RWPE1 (cell line): ENCODE measurements at regions of chr17 and their contacts with region 1.

Region 1: DNA sequence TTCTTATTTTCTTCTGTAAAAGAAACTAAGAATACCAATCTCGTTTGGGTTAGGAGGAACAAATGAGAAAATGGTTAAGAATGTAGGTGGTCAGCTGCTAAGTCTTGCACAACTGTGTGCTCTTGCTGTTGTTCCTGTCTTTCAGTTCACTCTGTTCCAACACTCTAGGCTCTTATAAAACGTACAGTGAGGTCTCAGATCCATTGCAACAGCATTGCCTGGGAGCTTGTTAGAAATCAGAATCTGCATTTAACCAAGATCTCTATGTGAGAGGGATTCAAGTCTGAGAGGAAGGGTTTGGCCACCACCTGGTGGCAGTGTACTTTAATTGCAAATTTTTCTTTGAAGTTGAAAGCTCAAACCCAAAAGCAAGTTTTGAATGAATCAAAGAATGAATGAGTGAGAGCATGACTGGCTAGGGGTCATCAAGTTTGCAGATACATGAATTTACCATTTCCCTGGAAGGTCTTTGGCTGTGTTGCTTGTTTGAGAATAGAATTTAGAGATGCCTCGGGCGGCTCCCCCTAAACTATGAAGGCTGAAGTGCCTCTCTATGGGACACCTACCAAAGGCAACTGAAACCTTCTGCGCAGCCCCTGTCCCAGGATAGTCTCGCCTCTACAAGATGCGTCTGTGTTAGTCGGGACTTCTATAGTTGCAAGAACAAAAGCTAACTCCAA is 2.5 kb downstream of the ALOX15B start:
- DNase-seq: peak; percentile 53
- H3K27ac ChIP-seq: peak overlapping the region; percentile 79
- CTCF ChIP-seq: peak; percentile 70

Region 2: GRCh38 chr17:7374353-7374752 is 667.0 kb before region 1 on chr17:
- CTCF ChIA-PET with region 1: no interaction called
- POLR2A ChIA-PET with region 1: no interaction called
- DNase-seq: no peak
- H3K27ac ChIP-seq: no peak overlapping the region
- CTCF ChIP-seq: no peak

Region 3: DNA sequence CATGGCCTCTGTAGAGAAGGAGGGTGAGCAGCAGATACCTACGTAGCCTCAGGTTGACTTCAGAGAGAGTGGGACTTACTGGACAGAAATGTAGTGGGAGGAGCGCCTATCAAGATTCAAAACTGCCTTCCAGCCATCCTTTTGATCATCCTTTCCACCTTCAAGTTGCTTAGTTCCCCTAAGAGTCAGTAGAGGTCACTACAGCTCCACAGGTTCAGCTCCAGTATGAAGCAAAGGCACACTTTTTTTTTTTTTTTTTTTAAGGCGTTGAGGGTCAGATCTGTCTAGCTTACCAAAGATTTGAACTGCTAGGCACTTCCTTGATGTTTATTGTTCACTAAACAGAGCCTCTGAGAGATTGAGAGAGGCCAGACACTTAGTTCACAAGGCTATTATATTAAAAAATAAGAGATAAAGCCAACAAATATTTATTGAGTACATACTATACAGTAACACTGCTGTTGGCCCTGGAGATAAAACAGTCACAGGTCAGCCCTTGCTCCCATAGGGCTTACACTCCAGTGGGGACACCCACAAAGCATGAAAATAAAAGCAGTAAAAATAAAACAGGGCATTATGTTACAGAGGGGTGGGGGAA is 128.4 kb before region 1 on chr17:
- CTCF ChIA-PET with region 1: interaction called, 14 read pairs
- POLR2A ChIA-PET with region 1: no interaction called
- DNase-seq: peak; percentile 61
- H3K27ac ChIP-seq: no peak overlapping the region
- CTCF ChIP-seq: peak; percentile 79

Region 4: GRCh38 chr17:7989781-7990655 is 51.4 kb before region 1 on chr17:
- CTCF ChIA-PET with region 1: interaction called, 22 read pairs
- POLR2A ChIA-PET with region 1: no interaction called
- DNase-seq: peak; percentile 84
- H3K27ac ChIP-seq: peak overlapping the region; percentile 57
- CTCF ChIP-seq: peak; percentile 94

Region 5: GRCh38 chr17:8016632-8017478 is 24.5 kb before region 1 on chr17:
- CTCF ChIA-PET with region 1: interaction called, 26 read pairs
- POLR2A ChIA-PET with region 1: interaction called, 3 read pairs
- DNase-seq: no peak
- H3K27ac ChIP-seq: peak overlapping the region; percentile 76
- CTCF ChIP-seq: peak; percentile 83

Region 6: GRCh38 chr17:8031261-8031661 is 10.1 kb before region 1 on chr17:
- CTCF ChIA-PET with region 1: interaction called, 21 read pairs
- POLR2A ChIA-PET with region 1: no interaction called
- DNase-seq: no peak
- H3K27ac ChIP-seq: no peak overlapping the region
- CTCF ChIP-seq: no peak

Region 7: DNA sequence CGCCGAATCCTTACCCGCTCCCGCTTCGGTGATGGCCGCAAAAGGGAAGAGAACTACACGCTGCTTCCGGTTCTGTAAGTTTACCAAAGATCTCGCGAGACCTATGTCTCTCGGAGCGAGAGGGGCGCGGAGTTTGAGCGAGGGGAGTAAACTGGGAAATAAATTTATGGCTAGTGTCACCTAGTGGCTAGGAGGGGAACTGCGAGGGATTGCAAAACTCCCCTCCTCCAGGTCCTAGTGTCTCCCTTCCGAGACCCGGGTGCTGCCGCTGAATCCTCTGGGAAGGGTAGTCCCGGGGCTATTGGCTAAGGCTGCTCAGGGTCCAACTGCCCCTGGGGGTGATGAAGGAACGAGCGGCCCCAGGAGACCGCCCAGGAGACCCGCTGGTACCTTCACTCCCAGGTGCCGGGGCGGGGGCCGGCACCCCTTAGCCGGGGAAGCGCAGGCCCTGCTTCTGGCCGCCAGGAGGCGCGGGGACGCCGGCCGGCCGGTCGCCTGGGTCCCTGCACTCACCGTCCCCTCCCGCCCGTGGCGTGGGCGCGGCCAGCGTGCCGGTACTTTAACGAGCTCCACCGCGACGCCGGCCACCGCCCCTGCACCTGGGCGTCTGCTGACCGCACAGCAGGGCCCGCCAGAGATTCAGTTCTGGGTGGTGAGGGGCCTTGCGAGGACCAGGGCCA is 341.9 kb after region 1 on chr17 and contains the start of gene RPL26:
- CTCF ChIA-PET with region 1: no interaction called
- POLR2A ChIA-PET with region 1: interaction called, 11 read pairs
- DNase-seq: peak; percentile 95
- H3K27ac ChIP-seq: peak within 1 kb of the TSS; percentile 88
- CTCF ChIP-seq: peak; percentile 99